Activated CD8-positive, alpha-beta T cell treated with anti-CD3 and anti-CD28 coated beads for 36 hours (primary cell): ENCODE measurements at regions of chr17 and their contacts with region 1.

Region 1: DNA sequence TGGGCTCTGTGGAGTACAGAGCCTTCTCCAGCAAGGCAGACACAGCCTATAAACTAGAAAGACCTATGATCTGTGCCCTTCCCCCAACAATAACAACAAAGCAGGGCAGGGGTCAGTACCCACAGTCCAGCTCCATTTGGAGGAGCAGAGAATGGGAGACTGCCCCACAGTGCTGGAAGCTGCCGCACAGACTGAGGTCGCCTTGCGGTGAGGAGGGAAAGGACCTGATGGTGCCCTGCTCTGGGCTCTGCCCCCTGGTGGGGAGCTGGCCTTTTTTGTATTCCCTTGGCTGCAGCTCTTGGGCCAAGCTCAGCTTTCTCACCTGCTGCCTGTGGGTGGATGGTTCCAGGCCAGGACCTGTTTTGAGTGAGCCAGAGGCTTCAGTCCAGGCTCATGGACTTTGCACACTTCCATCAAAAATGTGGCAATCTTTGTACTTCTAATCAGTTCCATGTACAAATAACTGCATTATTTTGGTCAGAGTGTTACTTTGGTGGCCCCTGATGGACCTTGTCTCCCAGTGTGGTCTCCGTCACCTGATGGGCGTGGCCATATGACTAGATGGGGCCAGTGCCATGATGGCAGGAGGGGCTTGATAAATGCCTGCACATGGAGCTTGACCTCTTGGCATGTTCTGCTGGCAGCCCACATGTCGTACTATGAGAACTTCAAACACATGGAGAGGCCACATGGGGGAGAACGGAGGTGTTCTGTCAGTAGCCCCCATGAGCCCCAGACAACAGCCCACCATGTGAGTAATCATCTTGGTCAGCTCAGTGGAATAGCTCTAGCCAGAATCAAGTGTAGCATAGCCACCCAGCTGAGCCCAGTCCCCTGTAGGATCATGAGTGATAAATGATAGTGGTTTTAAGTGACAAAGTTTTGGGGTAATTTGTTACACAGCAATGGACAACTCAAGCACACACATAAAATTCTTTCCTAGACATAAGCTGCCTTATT is 24.2 kb downstream of the B9D1 start:
- DNase-seq: peak; percentile 80
- ATAC-seq: peak; percentile 93
- H3K4me3 Mint-ChIP-seq: no peak overlapping the region
- H3K27ac Mint-ChIP-seq: no peak overlapping the region
- H3K4me1 Mint-ChIP-seq: no peaks in the 10 kb centered on the region
- H3K27me3 Mint-ChIP-seq: peaks cover 28% of the 10 kb centered on the region
- CTCF ChIP-seq: peak; percentile 76

Region 2: DNA sequence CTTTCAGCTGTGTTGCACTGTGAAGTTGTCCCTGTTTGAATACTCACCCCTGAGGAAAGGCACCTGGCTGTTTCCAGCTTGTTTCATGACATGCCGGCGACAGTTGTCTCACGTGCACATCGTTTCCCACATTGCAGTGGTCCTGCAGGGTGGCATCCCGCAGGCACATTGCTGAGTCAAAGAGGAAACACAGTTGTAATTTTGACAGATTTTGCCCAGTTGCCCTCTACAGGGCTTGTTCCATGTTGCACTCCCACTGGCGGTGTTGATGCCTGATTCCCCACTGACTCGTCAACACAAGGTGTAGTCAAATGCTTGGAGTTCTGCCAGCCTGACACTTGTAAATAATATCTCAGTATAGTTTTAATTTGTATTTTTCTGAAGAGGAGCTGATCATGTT is 77.4 kb before region 1 on chr17:
- CTCF ChIA-PET with region 1: no interaction called
- POLR2A ChIA-PET with region 1: no interaction called
- intact Hi-C with region 1: no loop called
- DNase-seq: no peak
- ATAC-seq: no peak
- H3K4me3 Mint-ChIP-seq: no peak overlapping the region
- H3K27ac Mint-ChIP-seq: no peak overlapping the region
- H3K4me1 Mint-ChIP-seq: no peaks in the 10 kb centered on the region
- H3K27me3 Mint-ChIP-seq: peaks cover 12% of the 10 kb centered on the region
- CTCF ChIP-seq: no peak

Region 3: DNA sequence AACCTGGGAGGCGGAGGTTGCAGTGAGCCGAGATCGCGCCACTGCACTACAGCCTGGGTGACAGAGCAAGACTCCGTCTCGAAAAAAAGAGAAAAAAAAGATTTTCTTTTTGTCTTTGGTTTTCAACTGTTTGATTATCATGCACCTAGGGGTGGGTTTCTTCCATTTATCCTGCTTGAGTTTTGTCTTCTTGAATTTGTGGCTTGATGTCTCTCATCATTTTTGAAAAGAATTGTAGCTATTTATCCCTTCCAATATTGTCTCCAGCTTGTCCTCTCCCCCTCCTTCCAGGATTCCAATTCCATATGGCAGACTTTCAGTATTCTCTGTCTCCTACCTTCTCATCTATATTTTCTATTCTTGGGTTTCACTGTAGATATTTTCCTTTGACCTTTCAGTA is 16.4 kb after region 1 on chr17:
- CTCF ChIA-PET with region 1: interaction called, 11 read pairs
- POLR2A ChIA-PET with region 1: no interaction called
- intact Hi-C with region 1: no loop called
- DNase-seq: no peak
- ATAC-seq: no peak
- H3K4me3 Mint-ChIP-seq: no peak overlapping the region
- H3K27ac Mint-ChIP-seq: no peak overlapping the region
- H3K4me1 Mint-ChIP-seq: no peaks in the 10 kb centered on the region
- H3K27me3 Mint-ChIP-seq: peaks cover 3% of the 10 kb centered on the region
- CTCF ChIP-seq: no peak

Region 4: DNA sequence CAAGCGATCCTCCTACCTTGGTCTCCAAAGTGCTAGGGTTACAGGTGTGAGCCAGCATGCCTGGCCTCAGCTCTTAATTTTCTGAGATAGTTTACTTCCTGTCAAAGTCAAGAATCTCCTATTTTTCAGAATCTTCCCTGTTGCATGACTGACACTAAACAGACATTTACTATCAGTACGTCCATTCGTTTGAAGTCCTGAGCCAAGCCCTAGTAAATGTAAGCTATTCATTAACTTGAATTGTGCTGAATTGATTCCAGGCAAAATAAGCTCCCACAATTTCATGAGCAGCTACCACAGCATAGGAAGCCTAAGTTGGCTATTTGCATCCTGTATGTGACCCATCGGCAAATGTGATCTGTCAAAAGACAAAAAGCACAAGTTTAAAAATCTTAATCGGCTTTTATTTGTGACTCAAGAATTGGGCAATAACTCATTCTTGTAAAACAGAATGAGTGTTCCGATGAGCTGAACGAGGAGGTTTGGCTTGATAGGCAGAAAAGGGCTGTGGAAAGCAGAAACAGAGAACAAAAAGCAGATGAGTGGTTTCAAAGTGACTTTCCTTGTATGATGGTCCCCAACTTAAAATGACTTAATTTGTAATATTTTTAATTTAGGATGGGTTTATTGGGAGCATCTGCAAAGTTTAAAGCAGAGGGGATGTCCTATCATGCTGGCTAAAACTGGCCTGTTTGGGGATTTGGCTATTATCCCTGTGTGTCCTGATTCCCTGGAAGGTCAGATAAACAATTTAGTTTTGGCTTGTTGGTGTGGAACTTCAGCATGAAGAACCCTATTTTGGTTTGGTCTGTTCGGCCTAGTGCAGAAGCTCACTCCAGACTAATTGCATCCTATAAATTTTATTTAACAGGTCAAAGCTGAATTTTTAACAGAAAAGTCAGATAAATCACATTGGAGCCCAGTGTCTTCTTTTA is 86.9 kb after region 1 on chr17:
- CTCF ChIA-PET with region 1: no interaction called
- POLR2A ChIA-PET with region 1: no interaction called
- intact Hi-C with region 1: no loop called
- DNase-seq: no peak
- ATAC-seq: no peak
- H3K4me3 Mint-ChIP-seq: no peak overlapping the region
- H3K27ac Mint-ChIP-seq: no peak overlapping the region
- H3K4me1 Mint-ChIP-seq: no peaks in the 10 kb centered on the region
- H3K27me3 Mint-ChIP-seq: peaks cover 5% of the 10 kb centered on the region
- CTCF ChIP-seq: no peak

Region 5: DNA sequence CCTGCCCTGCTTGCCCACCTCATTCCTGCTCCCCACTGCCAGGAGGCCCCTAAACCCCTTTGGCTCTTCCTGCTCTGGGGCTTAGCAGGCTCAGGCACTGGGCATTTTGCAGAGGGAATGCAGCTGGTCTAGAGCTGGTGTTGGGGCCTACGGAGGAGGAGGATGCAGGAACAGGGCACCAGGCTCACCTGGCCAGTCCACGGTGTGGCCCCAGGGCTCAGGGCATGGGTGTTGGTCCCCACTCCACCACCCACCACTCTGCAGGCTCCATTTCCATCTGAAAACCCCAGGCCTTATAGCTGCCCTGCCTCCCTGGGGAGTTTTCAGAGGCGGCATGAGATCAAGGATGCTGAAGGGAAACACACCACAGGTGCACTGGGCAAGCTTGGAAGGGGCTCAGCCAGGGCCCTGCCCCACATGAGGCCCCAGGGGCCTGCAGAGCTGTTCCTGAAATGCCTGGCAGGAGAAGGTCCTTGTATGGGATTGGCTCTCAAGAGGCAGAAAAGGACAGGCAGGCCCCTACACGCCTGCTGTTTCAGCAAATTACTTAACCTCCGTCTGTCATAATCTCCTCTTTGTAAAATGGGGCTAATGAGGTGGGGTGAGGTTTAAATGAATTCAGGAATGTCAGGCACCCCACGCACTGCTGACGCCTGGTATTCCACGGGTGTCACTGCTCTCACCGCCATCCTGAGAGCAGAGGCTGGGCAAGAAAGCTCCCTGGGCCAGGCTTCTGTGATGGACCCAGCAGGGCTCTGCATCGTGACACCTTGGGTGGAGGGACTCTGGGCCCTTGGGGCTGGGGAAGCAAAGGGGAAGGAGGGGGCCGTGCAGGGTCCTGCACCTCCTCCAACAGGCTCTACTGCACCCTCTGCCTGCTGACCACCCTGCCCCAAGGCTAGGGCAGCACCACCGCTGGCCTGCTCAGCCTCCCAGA is 368.7 kb after region 1 on chr17:
- CTCF ChIA-PET with region 1: no interaction called
- POLR2A ChIA-PET with region 1: no interaction called
- intact Hi-C with region 1: no loop called
- DNase-seq: no peak
- ATAC-seq: no peak
- H3K4me3 Mint-ChIP-seq: no peak overlapping the region
- H3K27ac Mint-ChIP-seq: no peak overlapping the region
- H3K4me1 Mint-ChIP-seq: no peaks in the 10 kb centered on the region
- H3K27me3 Mint-ChIP-seq: no peaks in the 10 kb centered on the region
- CTCF ChIP-seq: no peak